HEK293 (cell line): ENCODE measurements at regions of chr13 and their contacts with region 1.

Region 1: DNA sequence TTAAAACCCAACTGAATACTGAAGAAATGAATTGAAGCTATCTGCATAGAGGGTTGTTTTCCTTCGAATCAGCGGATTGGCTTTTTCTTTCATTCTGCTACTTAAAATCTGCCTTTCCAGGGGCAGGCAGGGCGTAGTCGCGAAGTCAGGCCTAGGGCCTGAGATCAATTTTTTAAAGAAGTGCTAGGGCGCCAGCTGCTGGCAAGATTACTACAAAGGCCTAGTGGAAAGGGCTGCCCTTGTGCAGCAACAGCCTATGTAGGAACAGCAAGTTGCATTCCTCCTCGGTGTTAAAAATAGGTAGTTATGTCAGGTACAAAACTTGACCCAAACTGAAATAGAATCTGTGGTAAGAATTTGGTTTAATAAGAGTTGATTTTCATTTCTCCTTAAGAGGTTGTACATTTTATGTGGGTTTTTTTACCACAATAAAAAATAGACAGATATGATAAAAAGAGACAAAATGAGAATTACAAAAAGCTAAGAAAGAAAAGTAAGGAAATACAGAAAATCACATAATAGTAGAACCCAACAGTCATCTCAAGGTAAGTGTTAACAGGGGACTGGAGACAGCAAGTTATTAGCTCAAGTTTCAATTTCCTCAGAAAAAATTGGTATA is 9.5 kb upstream of the URAD start:
- H3K4me3 ChIP-seq: no peak overlapping the region
- H3K27ac ChIP-seq: no peak overlapping the region
- H3K4me1 ChIP-seq: no peaks in the 10 kb centered on the region
- CTCF ChIP-seq: peak; percentile 56; the same call in 1 of the 2 replicates

Region 2: GRCh38 chr13:27679896-27680295 is 318.1 kb before region 1 on chr13:
- CTCF ChIA-PET with region 1: no interaction called
- POLR2A ChIA-PET with region 1: no interaction called
- H3K4me3 ChIP-seq: no peak overlapping the region
- H3K27ac ChIP-seq: no peak overlapping the region
- H3K4me1 ChIP-seq: no peaks in the 10 kb centered on the region
- CTCF ChIP-seq: no peak

Region 3: DNA sequence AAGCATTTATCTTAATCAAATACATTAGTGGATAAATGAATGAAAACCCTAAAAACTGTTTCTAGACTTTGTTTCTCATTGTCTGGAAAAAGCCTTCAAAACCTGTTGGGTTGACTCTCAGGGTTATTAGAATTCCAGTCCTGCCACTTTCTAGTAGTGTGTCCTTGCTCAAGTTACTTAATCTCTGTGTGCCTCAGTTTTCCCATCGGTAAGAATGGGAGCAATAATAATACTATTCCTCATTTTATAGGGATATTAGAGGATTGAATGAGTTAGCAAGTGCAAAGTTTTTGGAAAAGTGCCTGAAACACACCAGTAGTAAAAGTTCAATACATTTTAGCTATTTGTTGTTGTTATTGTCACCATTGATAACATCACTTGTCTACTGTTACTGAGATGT is 12.4 kb before region 1 on chr13:
- CTCF ChIA-PET with region 1: interaction called, 11 read pairs
- POLR2A ChIA-PET with region 1: no interaction called
- H3K4me3 ChIP-seq: no peak overlapping the region
- H3K27ac ChIP-seq: no peak overlapping the region
- H3K4me1 ChIP-seq: no peaks in the 10 kb centered on the region
- CTCF ChIP-seq: no peak